ENCODE measurements at regions of chr9 and their contacts with region 1.

Region 1: DNA sequence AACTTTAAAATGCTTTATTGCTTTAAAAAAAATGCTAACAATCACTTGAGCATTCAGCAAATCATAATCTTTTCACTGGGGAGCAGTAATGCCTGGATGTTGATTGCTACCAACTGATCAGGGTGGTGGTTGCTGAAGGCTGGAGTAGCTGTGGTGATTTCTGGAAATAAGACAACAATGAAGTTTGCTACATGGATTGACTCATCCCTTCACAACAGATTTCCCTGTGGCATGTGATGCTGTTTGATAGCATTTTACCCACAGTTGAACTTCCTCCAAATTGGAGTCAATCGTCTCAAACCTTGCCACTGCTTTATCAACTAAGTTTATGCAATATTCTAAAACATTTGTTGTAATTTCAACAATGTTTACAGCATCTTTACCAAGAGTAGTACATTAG is 83.3 kb downstream of the MLLT3 start:
- DNase-seq: no peak
- ATAC-seq: no peak
- H3K4me3 ChIP-seq: no peak overlapping the region
- H3K27ac ChIP-seq: no peak overlapping the region
- H3K4me1 ChIP-seq: no peaks in the 10 kb centered on the region
- H3K27me3 ChIP-seq: no peaks in the 10 kb centered on the region
- CTCF ChIP-seq: no peak

Region 2: GRCh38 chr9:20604562-20604961 is 65.6 kb after region 1 on chr9:
- CTCF ChIA-PET with region 1: no interaction called
- POLR2A ChIA-PET with region 1: no interaction called
- in situ Hi-C with region 1: no loop called
- intact Hi-C with region 1: no loop called
- DNase-seq: no peak
- ATAC-seq: no peak
- H3K4me3 ChIP-seq: no peak overlapping the region
- H3K27ac ChIP-seq: no peak overlapping the region
- H3K4me1 ChIP-seq: no peaks in the 10 kb centered on the region
- H3K27me3 ChIP-seq: no peaks in the 10 kb centered on the region
- CTCF ChIP-seq: no peak

Region 3: GRCh38 chr9:20640331-20641187 is 101.6 kb after region 1 on chr9:
- CTCF ChIA-PET with region 1: no interaction called
- POLR2A ChIA-PET with region 1: interaction called, 13 read pairs
- in situ Hi-C with region 1: no loop called
- intact Hi-C with region 1: no loop called
- DNase-seq: no peak
- ATAC-seq: no peak
- H3K4me3 ChIP-seq: no peak overlapping the region
- H3K27ac ChIP-seq: no peak overlapping the region
- H3K4me1 ChIP-seq: no peaks in the 10 kb centered on the region
- H3K27me3 ChIP-seq: no peaks in the 10 kb centered on the region
- CTCF ChIP-seq: no peak

Measured in Panc1 (cell line).